ENCODE measurements at regions of chr19 and their contacts with region 1.

Region 1: DNA sequence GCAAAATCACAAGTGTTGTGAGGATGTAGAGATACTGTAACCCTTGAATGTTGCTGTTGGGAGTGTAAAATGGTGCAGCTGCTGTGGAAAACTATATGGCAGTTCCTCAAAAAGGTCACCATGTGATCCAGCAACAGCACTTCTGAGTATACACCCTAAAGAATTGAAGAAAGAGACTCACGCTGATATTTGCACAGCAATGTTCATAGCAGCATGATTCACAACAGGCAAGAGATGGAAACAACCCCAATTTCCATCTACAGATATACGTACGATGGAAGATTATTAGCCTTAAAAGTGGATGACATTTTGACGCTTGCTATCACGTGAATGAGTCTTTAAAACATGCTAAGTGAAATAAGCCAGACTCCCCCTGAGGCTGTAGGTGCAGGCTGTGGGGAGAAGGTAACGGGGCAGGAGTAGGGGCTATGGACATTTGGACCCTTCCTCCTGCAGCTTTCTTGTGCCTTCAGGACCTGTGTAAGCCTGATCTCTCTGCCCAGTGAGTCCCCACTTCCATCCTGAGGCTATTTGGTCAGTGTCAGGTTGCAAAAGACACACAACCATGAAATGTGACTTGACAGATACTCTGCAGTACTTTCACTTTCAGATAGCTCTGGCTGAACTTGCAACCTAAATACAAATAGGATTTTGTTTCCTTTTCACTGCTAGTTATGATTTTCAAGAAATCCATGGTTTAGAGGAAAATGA is 17.6 kb upstream of the EID2 start:
- DNase-seq: no peak
- ATAC-seq: no peak

Region 2: DNA sequence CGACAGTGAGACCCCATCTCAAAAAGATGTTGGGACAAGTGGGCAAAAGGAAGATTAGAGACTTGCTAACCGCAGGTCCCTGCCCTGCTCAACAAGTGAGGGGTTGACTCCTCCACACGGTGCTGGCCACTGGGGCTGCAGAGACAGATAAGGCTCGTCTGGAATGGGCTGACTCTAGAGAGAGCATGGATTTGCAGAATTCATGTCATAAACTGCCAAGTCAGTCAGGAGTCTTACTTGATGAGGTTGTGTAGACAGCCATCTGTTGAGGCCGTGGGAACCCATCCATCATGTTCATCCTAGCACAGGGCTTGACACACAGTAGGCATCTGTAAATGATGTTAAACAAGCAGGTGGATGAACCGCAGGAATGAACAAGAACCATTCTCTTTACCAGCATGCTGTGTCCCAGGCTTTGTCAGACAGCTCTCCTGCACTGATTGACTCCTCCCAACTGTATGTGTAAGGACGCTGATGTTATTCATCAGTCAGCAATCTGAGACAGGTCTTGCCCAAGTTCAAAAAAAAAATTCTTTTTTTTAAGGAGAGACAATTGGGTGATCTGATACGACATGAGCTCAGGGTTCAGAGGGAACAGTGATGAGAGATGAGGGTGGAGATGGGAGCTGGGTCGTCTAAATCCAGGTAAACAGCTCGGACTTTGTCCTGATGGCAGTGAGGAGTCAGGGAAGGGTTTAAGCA is 175.5 kb before region 1 on chr19:
- intact Hi-C with region 1: no loop called
- DNase-seq: no peak
- ATAC-seq: no peak

Region 3: DNA sequence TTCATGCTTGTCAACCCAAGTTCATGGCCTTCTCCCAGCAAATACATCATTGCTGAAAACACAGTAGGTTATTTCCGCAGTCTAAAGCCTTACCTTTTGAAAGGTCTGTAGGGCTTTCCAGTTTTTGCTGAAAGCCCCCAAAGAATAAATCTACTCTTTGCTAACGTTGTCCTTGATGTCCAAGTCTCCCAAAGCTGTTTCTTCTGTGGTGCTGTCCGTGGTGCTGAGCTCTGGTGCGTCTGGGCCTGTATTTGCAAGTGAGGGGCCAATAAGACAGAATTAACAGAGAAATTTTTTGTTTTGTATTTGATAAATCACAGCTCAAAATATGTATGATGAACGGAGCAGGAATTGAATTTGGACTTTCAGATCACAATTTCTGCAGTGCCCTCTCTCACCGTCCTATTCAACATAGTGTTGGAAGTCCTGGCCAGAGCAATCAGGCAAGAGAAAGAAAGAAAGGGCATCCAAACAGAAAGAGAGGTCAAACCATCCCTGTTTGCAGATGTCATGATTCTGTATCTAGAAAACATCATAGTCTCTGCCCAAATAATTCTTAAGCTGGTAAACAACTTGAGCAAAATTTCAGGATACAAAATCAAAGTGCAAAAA is 88.3 kb after region 1 on chr19:
- intact Hi-C with region 1: no loop called
- DNase-seq: no peak
- ATAC-seq: no peak

Region 4: DNA sequence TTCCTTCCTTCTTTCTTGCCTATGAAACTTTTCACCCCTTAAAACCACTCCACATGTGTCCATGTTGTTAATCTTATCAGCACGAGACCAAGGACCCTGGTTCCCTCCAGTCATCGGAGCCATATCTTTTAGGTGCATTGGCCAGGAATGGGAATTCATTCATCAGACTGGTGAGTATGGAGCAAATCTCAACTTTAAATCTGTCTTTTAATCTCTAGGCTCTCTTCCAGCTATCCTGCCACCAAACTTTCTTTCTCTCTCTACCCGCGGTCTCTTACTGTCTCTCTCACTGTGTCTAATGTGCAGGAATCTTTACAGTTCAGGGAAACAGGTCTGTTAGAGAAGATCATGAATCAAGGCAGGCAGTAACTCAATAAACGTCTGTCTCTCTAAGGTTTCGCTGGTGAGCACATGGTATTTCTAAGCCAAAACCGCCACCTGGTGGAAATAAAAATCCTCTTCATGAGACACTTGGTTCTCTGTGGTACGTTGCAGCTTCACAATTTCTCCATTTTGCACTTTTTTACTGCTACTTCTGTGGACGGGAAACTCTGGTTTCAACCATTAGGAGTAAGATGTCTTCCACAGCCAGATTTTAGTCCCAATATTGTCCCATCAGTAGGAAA is 114.3 kb after region 1 on chr19:
- intact Hi-C with region 1: loop called in 1 of 2 experiments (anchors 10 kb)
- DNase-seq: peak in 1 of 2 donors; percentile 12
- ATAC-seq: peak; percentile 71